Common myeloid progenitor, CD34-positive (primary cell): ENCODE measurements at regions of chr12 and their contacts with region 1.

Region 1: GRCh38 chr12:132414634-132415326 is 75.2 kb upstream of the FBRSL1 start:
- DNase-seq: peak; percentile 67 to 79 (median 68)
- H3K4me3 ChIP-seq: no peak overlapping the region
- H3K27ac ChIP-seq: no peak overlapping the region
- H3K4me1 ChIP-seq: peaks cover 0 to 13% (median 9%) of the 10 kb centered on the region in 4 experiments
- H3K27me3 ChIP-seq: peaks cover 0 to 5% (median 0%) of the 10 kb centered on the region in 5 experiments

Region 2: DNA sequence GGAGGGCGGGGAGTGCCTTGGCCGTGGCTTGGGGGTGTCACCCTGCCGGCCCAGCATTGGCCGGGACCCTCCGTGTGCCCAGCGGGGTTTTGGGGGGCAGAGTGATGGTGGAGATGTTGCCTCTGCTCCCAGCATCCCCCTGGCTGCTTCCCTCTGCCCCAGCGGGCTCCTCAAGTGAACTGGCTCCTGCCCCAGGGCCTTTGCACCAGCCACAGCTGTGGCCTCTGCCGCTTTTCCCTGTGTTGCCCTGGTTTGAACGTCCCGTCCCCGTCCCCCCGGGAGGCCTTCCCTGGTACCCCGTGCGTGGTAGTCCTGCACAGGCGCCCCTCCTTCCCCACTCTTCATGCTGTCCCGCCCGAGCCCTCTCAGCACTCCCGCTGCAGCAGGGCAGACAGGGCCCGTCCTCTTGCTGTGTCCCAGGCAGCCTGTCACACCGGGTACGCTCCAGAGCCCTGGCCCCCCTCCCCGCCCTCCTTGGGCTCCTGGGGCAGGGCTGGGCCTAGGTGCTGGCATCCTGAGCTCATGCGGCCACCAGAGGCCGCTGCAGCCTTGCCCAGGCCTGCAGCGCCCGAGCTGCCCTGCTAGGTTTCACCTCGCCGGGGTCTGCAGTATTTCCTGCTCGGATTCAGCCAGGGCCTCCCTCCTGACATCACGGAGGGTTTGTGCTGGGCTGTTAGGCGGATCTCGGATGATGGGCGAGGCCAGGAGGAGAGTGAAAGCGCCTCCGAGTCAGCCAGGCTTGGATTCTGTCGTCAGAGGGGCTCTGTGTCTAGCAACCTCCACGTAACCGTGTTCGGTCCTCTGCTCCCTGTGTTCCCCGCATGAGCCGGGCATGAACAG is 261.1 kb before region 1 on chr12:
- CTCF ChIA-PET with region 1: interaction called, 21 read pairs
- POLR2A ChIA-PET with region 1: no interaction called
- DNase-seq: peak; percentile 87 to 93 (median 93)
- H3K4me3 ChIP-seq: peak overlapping the region in 3 of 7 experiments; percentile 32 to 50 (median 48)
- H3K27ac ChIP-seq: no peak overlapping the region
- H3K4me1 ChIP-seq: peaks cover 0 to 6% (median 2%) of the 10 kb centered on the region in 4 experiments
- H3K27me3 ChIP-seq: no peaks in the 10 kb centered on the region

Region 3: DNA sequence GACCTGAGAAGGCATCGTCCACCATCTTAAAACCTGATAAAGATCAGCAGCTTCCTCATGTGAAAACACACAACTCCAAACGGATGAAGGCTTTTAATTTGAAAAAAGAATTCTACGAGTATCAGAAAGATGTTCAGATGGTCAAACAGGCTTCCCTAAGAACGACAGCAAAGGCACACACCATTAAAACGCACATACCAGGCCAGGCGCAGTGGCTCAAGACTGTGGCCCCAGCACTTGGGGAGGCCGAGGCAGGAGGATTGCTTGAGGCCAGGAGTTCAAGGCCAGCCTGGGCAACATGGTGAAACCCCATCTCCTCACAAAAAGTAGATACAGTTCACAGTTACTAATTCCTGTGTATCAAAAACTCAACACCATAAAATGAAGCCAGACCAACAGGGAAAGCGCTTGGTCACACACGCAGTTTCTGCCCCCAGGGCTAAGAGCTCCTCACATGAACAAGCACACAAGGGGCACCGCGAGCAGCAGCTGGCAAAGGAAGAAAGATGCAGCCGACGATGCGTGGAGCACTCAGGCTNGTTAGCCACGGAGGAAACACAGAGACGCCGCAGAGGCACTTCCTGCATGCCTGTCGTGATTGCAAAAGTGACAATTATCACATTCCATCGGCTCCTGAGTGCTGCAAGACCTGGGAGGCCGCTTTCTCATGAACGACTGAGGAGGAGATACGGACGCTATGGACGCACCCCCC is 192.5 kb before region 1 on chr12:
- CTCF ChIA-PET with region 1: no interaction called
- POLR2A ChIA-PET with region 1: no interaction called
- DNase-seq: peak; percentile 84 to 92 (median 89)
- H3K4me3 ChIP-seq: no peak overlapping the region
- H3K27ac ChIP-seq: no peak overlapping the region
- H3K4me1 ChIP-seq: peaks cover 0 to 9% (median 8%) of the 10 kb centered on the region in 4 experiments
- H3K27me3 ChIP-seq: peaks cover 0 to 31% (median 2%) of the 10 kb centered on the region in 5 experiments

Region 4: DNA sequence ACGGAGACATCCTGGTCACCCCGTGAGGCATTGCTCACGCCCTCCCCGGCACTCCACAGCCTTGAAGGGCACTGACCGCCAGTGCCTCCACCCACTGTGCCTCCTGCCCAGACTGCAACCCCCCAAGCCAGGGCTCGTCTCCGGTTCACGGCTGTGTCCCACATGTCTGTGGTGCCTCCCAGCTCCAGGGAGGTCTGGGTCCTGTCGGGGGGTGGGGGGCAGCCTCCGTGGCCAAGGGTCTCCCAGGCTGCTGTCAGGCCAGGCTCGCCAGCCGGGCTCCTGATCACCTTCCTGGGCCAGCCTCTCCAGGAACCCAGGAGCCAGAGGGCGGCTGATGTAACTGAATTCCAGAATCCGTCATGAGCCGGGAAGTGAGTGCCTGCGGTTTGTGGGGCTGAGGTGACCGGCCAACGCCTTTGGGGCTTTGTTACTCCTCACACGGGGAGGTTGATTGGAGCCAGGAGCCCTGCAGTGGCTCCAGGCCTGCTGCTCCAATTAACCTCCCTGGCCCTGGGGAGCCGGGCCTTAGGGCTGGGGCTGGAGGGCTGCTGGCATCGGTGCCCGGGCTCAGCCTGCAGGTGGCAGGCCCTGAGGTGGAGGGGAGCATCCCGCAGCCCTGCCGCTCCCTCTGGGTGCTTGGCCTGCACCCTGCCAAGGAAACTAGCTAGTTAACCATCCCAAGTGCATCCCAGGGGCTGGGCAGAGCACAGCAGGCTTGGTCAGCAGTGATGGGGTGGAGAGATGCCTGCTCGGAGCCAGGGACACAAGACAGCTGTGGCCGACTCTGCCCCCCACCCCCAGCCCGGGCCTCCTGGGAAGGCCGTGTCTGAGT is 38.8 kb after region 1 on chr12:
- CTCF ChIA-PET with region 1: no interaction called
- POLR2A ChIA-PET with region 1: no interaction called
- DNase-seq: no peak
- H3K4me3 ChIP-seq: no peak overlapping the region
- H3K27ac ChIP-seq: no peak overlapping the region
- H3K4me1 ChIP-seq: peaks cover 0 to 55% (median 33%) of the 10 kb centered on the region in 4 experiments
- H3K27me3 ChIP-seq: no peaks in the 10 kb centered on the region

Region 5: DNA sequence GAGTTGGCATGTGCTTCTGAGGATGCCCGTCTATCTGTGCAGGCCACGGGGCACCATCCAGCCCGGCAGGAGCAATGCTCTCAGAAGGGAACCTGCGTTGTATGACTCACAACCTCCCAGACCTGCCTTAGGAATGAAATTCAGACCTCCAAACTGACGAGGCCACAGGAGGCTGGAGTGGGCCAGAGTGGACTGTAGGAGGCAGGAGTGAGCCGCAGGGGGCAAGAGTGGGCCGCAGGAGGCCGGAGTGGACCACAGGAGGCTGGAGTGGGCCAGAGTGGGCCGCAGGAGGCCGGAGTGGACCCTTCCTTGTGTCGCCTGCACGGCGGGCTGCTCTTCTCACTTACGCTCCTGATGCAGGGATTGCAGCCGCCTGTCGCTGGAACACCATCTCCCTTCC is 64.1 kb after region 1 on chr12:
- CTCF ChIA-PET with region 1: interaction called, 12 read pairs
- POLR2A ChIA-PET with region 1: no interaction called
- DNase-seq: no peak
- H3K4me3 ChIP-seq: no peak overlapping the region
- H3K27ac ChIP-seq: no peak overlapping the region
- H3K4me1 ChIP-seq: peaks cover 0 to 55% (median 40%) of the 10 kb centered on the region in 4 experiments
- H3K27me3 ChIP-seq: no peaks in the 10 kb centered on the region

Region 6: DNA sequence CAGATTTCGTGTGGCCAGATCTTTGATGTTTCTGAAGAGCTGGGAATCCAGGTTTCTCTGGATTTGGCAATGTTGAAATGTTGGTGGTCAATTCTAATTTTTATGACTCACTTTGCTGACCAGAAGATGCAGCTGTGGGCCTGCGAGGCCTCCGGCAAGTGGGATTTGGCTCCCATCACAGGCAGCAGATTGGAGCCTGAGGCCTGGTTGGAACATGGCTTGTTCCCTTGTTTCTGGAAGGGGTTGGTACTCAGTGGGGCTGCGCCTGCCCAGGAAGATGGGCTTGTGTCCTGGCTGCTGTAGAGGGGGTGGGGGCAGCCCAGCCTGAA is 98.3 kb after region 1 on chr12:
- CTCF ChIA-PET with region 1: interaction called, 39 read pairs
- POLR2A ChIA-PET with region 1: no interaction called
- DNase-seq: no peak
- H3K4me3 ChIP-seq: no peak overlapping the region
- H3K27ac ChIP-seq: no peak overlapping the region
- H3K4me1 ChIP-seq: peaks cover 0 to 7% (median 1%) of the 10 kb centered on the region in 4 experiments
- H3K27me3 ChIP-seq: peaks cover 0 to 26% (median 0%) of the 10 kb centered on the region in 5 experiments

Region 7: DNA sequence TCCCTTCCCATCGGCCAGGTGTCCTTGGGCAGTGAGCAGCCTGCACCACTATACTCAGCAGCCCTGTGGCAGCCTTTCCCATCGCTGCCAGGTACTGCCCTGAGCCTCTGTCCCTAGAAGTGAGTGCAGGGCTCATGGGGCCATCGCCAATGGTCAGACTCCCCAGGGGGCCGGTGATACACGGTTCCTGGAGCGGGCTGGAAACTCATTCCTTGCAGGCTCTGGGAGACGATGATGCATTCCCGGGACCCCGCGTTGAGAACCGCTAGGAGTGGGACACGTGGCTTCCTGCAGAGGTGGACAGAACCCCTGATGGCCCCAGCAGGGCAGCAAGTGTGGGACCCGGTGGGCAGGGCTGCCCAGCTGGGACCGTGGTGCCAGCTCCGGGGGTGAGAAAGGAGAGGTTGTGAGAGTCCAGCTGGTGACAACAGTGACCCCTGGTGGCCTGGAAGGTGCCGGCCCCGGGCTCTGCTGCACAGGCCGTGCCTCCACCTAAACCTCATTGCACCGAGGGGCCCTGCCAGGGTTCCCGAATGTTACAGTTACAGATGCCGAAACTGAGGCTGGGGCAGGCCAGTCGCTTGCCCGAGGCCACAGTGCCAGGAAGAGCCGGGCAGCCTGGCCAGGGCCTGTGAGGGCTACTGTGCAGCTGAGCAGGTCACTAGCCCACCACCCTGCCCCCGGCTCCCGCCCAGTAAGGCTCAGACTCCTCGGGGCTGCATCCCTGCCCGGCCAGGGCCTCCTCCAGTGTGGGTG is 109.0 kb after region 1 on chr12:
- CTCF ChIA-PET with region 1: interaction called, 127 read pairs
- POLR2A ChIA-PET with region 1: interaction called, 7 read pairs
- DNase-seq: peak; percentile 49 to 74 (median 66)
- H3K4me3 ChIP-seq: no peak overlapping the region
- H3K27ac ChIP-seq: no peak overlapping the region
- H3K4me1 ChIP-seq: peaks cover 0 to 6% (median 3%) of the 10 kb centered on the region in 4 experiments
- H3K27me3 ChIP-seq: no peaks in the 10 kb centered on the region

Region 8: GRCh38 chr12:132566516-132567131 is 151.8 kb after region 1 on chr12:
- CTCF ChIA-PET with region 1: interaction called, 17 read pairs
- POLR2A ChIA-PET with region 1: no interaction called
- DNase-seq: no peak
- H3K4me3 ChIP-seq: no peak overlapping the region
- H3K27ac ChIP-seq: no peak overlapping the region
- H3K4me1 ChIP-seq: peaks cover 0 to 6% (median 5%) of the 10 kb centered on the region in 4 experiments
- H3K27me3 ChIP-seq: no peaks in the 10 kb centered on the region

Region 9: GRCh38 chr12:132632501-132633228 is 217.9 kb after region 1 on chr12:
- CTCF ChIA-PET with region 1: no interaction called
- POLR2A ChIA-PET with region 1: no interaction called
- DNase-seq: no peak
- H3K4me3 ChIP-seq: no peak overlapping the region
- H3K27ac ChIP-seq: no peak overlapping the region
- H3K4me1 ChIP-seq: peaks cover 0 to 3% (median 0%) of the 10 kb centered on the region in 4 experiments
- H3K27me3 ChIP-seq: no peaks in the 10 kb centered on the region